MCF 10A (cell line): ENCODE measurements at regions of chr5 and their contacts with region 1.

Region 1: GRCh38 chr5:138464008-138464387 is 1.3 kb upstream of the EGR1 start:
- DNase-seq: peak; percentile 98
- H3K4me3 Mint-ChIP-seq: peak overlapping the region; percentile 78
- H3K27ac Mint-ChIP-seq: peak overlapping the region; percentile 93
- H3K4me1 Mint-ChIP-seq: peaks cover 45% of the 10 kb centered on the region
- H3K27me3 Mint-ChIP-seq: peaks cover 20% of the 10 kb centered on the region
- CTCF ChIP-seq: peak; percentile 97

Region 2: GRCh38 chr5:138316355-138316754 is 147.6 kb before region 1 on chr5:
- CTCF ChIA-PET with region 1: no interaction called
- POLR2A ChIA-PET with region 1: no interaction called
- intact Hi-C with region 1: no loop called
- DNase-seq: no peak
- H3K4me3 Mint-ChIP-seq: no peak overlapping the region
- H3K27ac Mint-ChIP-seq: no peak overlapping the region
- H3K4me1 Mint-ChIP-seq: no peaks in the 10 kb centered on the region
- H3K27me3 Mint-ChIP-seq: no peaks in the 10 kb centered on the region
- CTCF ChIP-seq: no peak

Region 3: GRCh38 chr5:138482638-138483037 is 18.6 kb after region 1 on chr5:
- CTCF ChIA-PET with region 1: interaction called, 16 read pairs
- POLR2A ChIA-PET with region 1: interaction called, 32 read pairs
- intact Hi-C with region 1: no loop called
- DNase-seq: peak; percentile 59
- H3K4me3 Mint-ChIP-seq: no peak overlapping the region
- H3K27ac Mint-ChIP-seq: peak overlapping the region; percentile 2
- H3K4me1 Mint-ChIP-seq: peaks cover 17% of the 10 kb centered on the region
- H3K27me3 Mint-ChIP-seq: no peaks in the 10 kb centered on the region
- CTCF ChIP-seq: no peak

Region 4: GRCh38 chr5:138491669-138492559 is 27.9 kb after region 1 on chr5:
- CTCF ChIA-PET with region 1: interaction called, 14 read pairs
- POLR2A ChIA-PET with region 1: interaction called, 626 read pairs
- intact Hi-C with region 1: loop called (anchors 1 kb)
- DNase-seq: peak; percentile 97
- H3K4me3 Mint-ChIP-seq: peak overlapping the region; percentile 94
- H3K27ac Mint-ChIP-seq: peak overlapping the region; percentile 70
- H3K4me1 Mint-ChIP-seq: peaks cover 45% of the 10 kb centered on the region
- H3K27me3 Mint-ChIP-seq: no peaks in the 10 kb centered on the region
- CTCF ChIP-seq: no peak

Region 5: DNA sequence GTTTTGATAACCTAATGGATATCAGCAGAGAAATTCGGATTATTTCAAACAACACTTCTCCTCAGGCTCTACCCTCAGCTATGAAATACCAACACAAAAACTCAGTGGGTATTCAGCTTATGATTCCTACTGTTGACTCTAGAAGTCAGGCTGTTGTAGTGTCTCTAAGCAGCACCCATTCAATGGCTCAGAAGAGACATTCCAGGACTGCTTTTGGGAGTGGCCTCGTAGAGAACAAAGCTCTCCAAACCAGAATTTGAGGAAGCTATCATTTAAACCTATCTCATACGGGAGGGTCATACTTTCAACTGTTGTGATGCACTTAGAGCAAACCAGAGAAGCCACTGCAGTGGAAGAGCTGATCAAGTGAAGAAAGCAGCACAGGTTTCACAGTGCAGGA is 45.0 kb after region 1 on chr5:
- CTCF ChIA-PET with region 1: interaction called, 268 read pairs
- POLR2A ChIA-PET with region 1: interaction called, 626 read pairs
- intact Hi-C with region 1: no loop called
- DNase-seq: no peak
- H3K4me3 Mint-ChIP-seq: no peak overlapping the region
- H3K27ac Mint-ChIP-seq: peak overlapping the region; percentile 80
- H3K4me1 Mint-ChIP-seq: peaks cover 41% of the 10 kb centered on the region
- H3K27me3 Mint-ChIP-seq: no peaks in the 10 kb centered on the region
- CTCF ChIP-seq: no peak

Region 6: GRCh38 chr5:138528208-138528607 is 64.2 kb after region 1 on chr5:
- CTCF ChIA-PET with region 1: interaction called, 66 read pairs
- POLR2A ChIA-PET with region 1: interaction called, 65 read pairs
- intact Hi-C with region 1: no loop called
- DNase-seq: peak; percentile 41
- H3K4me3 Mint-ChIP-seq: peak overlapping the region; percentile 1
- H3K27ac Mint-ChIP-seq: no peak overlapping the region
- H3K4me1 Mint-ChIP-seq: peaks cover 49% of the 10 kb centered on the region
- H3K27me3 Mint-ChIP-seq: no peaks in the 10 kb centered on the region
- CTCF ChIP-seq: no peak

Region 7: DNA sequence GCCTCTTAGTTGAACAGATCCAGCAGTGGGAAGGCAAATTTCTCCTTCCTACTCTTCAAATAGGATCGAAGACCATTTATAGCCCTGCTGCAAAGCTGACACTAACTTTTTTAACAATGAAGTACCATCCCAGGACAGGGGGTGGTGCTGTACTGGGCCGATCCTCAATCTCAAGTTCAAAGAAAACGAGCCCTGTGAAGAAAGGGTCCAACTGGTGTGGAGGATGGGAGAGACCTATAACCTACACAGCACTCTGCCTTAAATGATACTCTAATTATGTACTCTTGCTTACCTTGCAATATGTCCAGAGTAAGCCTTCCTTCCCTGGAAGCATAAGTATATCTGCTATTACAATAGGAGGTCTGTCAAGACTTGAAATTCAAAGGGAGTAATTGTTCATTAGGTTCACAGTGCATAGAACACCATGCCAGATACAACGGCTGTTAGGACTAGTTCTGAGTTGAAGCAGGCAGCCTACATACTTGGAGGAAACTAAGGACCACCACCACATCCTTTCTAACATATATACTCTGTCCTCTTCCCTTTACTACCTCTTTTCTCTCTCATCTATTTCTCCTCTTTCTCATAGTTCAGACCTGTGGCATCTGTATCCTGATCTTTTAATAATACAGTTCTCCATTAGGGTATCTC is 72.8 kb after region 1 on chr5:
- CTCF ChIA-PET with region 1: interaction called, 53 read pairs
- POLR2A ChIA-PET with region 1: interaction called, 219 read pairs
- intact Hi-C with region 1: no loop called
- DNase-seq: no peak
- H3K4me3 Mint-ChIP-seq: no peak overlapping the region
- H3K27ac Mint-ChIP-seq: peak overlapping the region; percentile 66
- H3K4me1 Mint-ChIP-seq: peaks cover 44% of the 10 kb centered on the region
- H3K27me3 Mint-ChIP-seq: no peaks in the 10 kb centered on the region
- CTCF ChIP-seq: peak; percentile 33

Region 8: DNA sequence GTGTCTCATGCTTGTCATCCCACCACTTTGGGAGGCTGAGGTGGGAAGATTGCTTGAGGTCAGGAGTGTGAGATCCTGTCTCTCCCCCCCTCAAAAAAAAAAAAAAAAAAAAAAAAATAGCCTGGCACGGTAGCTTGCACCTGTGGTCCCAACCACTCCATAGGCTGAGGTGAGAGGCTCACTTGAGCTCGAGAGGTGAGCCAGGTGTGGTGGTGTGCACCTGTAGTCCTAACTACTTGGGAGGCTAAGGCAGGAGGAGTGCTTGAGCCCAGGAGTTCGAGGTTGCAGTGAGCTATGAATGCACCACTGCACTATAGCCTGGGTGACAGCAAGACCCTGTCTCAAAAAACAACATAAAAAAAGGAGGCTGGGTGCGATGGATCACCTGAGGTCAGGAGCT is 88.7 kb after region 1 on chr5:
- CTCF ChIA-PET with region 1: interaction called, 111 read pairs
- POLR2A ChIA-PET with region 1: interaction called, 219 read pairs
- intact Hi-C with region 1: loop called (anchors 1 kb)
- DNase-seq: no peak
- H3K4me3 Mint-ChIP-seq: no peak overlapping the region
- H3K27ac Mint-ChIP-seq: no peak overlapping the region
- H3K4me1 Mint-ChIP-seq: peaks cover 10% of the 10 kb centered on the region
- H3K27me3 Mint-ChIP-seq: no peaks in the 10 kb centered on the region
- CTCF ChIP-seq: no peak